Ovary (tissue), 10 donors: ENCODE measurements at regions of chr1 and their contacts with region 1.

Region 1: GRCh38 chr1:174982971-174983689 is 16.6 kb upstream of the CACYBP start:
- DNase-seq: peak in 1 of 5 donors; percentile 52
- H3K4me3 ChIP-seq: no peak overlapping the region
- H3K27ac ChIP-seq: no peak overlapping the region
- H3K4me1 ChIP-seq: no peaks in the 10 kb centered on the region
- H3K27me3 ChIP-seq: no peaks in the 10 kb centered on the region
- CTCF ChIP-seq: peak; percentile 56 to 81 (median 60)
- EP300 ChIP-seq: no peak
- POLR2A ChIP-seq: no peak

Region 2: DNA sequence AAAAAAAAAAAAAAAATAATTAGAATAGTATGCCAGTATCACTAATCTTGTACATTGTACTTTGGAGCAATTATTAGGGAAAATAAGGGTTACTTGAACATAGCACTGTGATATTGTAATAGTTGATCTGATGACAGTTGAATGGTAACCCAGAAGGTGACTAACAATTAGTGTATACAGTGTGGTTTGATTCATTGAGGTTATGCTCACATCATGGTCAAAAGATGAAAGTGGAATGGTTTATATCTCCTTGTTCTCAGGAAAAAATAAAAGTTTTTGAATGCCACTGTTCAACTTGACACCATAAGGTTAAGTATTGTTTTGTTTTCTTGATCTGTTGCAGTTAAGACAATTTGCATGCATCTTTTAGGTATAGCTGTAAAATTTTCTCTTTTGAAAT is 448.3 kb before region 1 on chr1:
- intact Hi-C with region 1: no loop called
- DNase-seq: no peak
- H3K4me3 ChIP-seq: no peak overlapping the region
- H3K27ac ChIP-seq: no peak overlapping the region
- H3K4me1 ChIP-seq: no peaks in the 10 kb centered on the region
- H3K27me3 ChIP-seq: no peaks in the 10 kb centered on the region
- CTCF ChIP-seq: no peak
- EP300 ChIP-seq: no peak
- POLR2A ChIP-seq: no peak

Region 3: DNA sequence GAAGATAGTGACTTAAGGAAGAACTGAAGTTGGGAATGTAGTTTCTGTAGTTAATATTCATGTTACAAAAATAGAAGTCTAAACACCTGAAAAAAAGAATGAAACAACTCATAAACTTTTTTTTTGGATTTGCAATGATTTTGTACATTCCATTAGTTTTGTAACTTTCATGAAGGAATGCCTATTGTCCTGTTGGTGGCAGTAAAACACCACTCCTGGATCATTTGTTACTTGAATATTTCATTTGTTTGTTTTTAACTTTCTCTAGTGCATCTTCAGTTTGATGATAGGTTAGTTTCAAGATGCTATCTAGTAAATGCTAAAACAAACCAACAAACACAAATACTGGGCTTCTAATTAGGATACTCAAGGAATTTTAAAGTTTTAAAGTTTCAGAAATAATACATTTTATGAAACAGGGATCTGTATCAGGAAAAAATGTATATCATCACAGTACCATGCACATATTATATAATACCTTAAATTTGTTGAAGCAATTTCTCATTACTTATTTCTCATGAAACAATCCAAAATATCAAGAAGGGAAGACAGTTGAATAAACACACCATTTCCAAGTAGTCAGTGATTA is 213.1 kb before region 1 on chr1:
- intact Hi-C with region 1: loop called in 3 of 4 experiments (anchors 5 to 10 kb)
- DNase-seq: no peak
- H3K4me3 ChIP-seq: no peak overlapping the region
- H3K27ac ChIP-seq: no peak overlapping the region
- H3K4me1 ChIP-seq: no peaks in the 10 kb centered on the region
- H3K27me3 ChIP-seq: no peaks in the 10 kb centered on the region
- CTCF ChIP-seq: peak; percentile 50 to 70 (median 55)
- EP300 ChIP-seq: no peak
- POLR2A ChIP-seq: no peak